ENCODE measurements at regions of chr16 and their contacts with region 1.

Region 1: GRCh38 chr16:68093816-68094613 is 8.8 kb downstream of the NFATC3 start:
- DNase-seq: no peak
- H3K4me3 ChIP-seq: no peak overlapping the region
- H3K27ac ChIP-seq: no peak overlapping the region
- H3K4me1 ChIP-seq: no peaks in the 10 kb centered on the region
- H3K27me3 ChIP-seq: no peaks in the 10 kb centered on the region
- CTCF ChIP-seq: no peak

Region 2: DNA sequence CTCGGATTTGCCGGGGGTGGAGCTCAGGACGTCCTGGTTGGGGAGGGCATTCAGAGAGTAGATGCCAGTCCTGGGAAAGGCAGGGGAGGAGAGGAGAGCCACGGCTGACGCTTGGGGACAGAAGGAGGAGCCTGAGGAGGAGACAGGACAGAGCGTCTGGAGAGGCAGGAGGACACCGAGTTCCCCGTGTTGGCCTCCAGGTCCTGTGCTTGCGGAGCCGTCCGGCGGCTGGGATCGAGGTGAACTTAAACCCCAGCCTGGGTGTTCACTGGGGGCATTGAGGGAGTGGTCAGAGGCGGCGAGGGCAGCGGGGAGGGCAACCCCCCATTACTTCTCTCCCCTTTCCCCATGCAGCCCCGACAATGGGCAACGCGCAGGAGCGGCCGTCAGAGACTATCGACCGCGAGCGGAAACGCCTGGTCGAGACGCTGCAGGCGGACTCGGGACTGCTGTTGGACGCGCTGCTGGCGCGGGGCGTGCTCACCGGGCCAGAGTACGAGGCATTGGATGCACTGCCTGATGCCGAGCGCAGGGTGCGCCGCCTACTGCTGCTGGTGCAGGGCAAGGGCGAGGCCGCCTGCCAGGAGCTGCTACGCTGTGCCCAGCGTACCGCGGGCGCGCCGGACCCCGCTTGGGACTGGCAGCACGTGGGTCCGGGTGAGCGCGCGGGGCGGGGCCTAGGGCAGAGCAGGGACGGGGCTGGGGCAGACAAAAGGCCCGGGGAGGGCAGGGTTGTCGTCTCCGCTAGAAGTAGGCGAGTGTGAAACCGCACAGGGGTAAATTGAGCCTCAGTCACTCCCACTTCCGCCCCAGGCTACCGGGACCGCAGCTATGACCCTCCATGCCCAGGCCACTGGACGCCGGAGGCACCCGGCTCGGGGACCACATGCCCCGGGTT is 920.0 kb before region 1 on chr16:
- intact Hi-C with region 1: no loop called
- DNase-seq: peak; percentile 92
- H3K4me3 ChIP-seq: peak overlapping the region; percentile 50
- H3K27ac ChIP-seq: peak overlapping the region; percentile 94
- H3K4me1 ChIP-seq: peaks cover 26% of the 10 kb centered on the region
- H3K27me3 ChIP-seq: no peaks in the 10 kb centered on the region
- CTCF ChIP-seq: no peak

Region 3: DNA sequence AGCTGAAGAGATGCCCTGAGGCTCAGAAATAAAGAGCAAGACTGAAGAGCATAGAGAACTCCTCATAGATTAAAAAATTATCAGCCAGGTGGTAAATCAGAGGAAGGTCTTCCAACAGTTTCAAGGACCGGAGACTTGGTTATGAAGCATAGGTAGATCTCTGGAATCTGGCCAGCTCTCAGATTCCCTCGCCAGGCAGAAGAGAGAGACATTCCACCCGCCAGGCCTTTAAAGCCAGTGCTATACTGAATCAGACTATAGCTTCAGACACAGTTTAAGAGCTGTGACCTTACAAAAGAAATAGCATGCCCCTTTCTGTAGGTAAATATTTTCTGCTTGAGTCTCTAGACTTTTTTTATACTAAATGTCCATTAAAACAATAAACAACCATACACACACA is 61.4 kb after region 1 on chr16:
- intact Hi-C with region 1: loop called (anchors 10 kb)
- DNase-seq: no peak
- H3K4me3 ChIP-seq: no peak overlapping the region
- H3K27ac ChIP-seq: no peak overlapping the region
- H3K4me1 ChIP-seq: no peaks in the 10 kb centered on the region
- H3K27me3 ChIP-seq: no peaks in the 10 kb centered on the region
- CTCF ChIP-seq: no peak

Region 4: GRCh38 chr16:68179196-68179795 is 85.3 kb after region 1 on chr16:
- intact Hi-C with region 1: no loop called
- DNase-seq: no peak
- H3K4me3 ChIP-seq: no peak overlapping the region
- H3K27ac ChIP-seq: no peak overlapping the region
- H3K4me1 ChIP-seq: no peaks in the 10 kb centered on the region
- H3K27me3 ChIP-seq: no peaks in the 10 kb centered on the region
- CTCF ChIP-seq: no peak

Region 5: DNA sequence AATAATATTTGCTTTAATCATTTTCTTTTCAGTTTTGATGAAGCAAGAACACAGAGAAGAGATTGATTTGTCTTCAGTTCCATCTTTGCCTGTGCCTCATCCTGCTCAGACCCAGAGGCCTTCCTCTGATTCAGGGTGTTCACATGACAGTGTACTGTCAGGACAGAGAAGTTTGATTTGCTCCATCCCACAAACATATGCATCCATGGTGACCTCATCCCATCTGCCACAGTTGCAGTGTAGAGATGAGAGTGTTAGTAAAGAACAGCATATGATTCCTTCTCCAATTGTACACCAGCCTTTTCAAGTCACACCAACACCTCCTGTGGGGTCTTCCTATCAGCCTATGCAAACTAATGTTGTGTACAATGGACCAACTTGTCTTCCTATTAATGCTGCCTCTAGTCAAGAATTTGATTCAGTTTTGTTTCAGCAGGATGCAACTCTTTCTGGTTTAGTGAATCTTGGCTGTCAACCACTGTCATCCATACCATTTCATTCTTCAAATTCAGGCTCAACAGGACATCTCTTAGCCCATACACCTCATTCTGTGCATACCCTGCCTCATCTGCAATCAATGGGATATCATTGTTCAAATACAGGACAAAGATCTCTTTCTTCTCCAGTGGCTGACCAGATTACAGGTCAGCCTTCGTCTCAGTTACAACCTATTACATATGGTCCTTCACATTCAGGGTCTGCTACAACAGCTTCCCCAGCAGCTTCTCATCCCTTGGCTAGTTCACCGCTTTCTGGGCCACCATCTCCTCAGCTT is 96.9 kb after region 1 on chr16:
- intact Hi-C with region 1: no loop called
- DNase-seq: no peak
- H3K4me3 ChIP-seq: no peak overlapping the region
- H3K27ac ChIP-seq: no peak overlapping the region
- H3K4me1 ChIP-seq: no peaks in the 10 kb centered on the region
- H3K27me3 ChIP-seq: no peaks in the 10 kb centered on the region
- CTCF ChIP-seq: no peak

Region 6: DNA sequence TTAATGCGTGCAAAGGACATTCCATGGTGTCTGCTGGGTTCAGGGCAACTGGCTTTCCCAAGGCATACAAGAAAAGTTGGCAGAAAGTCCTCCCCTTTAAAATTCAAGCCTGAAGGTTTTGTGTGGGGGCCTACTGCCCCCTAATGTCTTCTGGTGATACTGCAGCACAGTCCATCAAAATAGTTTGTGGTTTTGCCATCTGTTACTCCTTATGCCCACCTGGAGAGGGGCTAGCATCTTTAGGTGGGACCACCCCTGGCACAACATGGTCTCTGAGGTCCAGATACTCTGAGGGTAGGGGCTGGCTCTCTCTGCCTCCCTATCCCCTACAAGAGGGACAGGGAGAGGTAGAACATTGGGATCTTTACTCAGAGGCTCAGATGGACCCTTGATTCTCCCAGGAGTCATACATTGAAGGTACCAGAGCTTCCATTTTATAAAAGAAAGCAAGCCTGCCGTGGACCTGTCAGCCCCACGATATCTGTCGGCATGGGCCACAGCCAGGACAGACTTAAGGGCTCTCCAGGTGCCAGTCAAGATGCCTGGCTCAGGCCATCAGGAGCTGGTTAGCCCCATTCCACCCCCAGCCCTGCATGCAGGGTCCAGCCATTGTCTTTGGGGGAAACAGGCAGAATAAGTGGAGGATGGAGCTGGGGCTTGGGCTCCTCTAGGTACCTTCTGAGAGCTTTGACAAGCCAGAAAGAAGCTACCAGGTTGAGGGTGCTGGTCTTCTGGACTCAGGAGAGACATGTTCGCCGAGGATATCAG is 135.6 kb after region 1 on chr16:
- intact Hi-C with region 1: loop called (anchors 5 kb)
- DNase-seq: no peak
- H3K4me3 ChIP-seq: no peak overlapping the region
- H3K27ac ChIP-seq: no peak overlapping the region
- H3K4me1 ChIP-seq: peaks cover 4% of the 10 kb centered on the region
- H3K27me3 ChIP-seq: no peaks in the 10 kb centered on the region
- CTCF ChIP-seq: peak; percentile 92

Region 7: GRCh38 chr16:68460067-68460466 is 366.1 kb after region 1 on chr16:
- intact Hi-C with region 1: no loop called
- DNase-seq: no peak
- H3K4me3 ChIP-seq: no peak overlapping the region
- H3K27ac ChIP-seq: no peak overlapping the region
- H3K4me1 ChIP-seq: no peaks in the 10 kb centered on the region
- H3K27me3 ChIP-seq: no peaks in the 10 kb centered on the region
- CTCF ChIP-seq: no peak

Measured in colonic mucosa (tissue), 4 donors.